Posterior cingulate gyrus (tissue), 11 donors: ENCODE measurements at regions of chr11 and their contacts with region 1.

Region 1: DNA sequence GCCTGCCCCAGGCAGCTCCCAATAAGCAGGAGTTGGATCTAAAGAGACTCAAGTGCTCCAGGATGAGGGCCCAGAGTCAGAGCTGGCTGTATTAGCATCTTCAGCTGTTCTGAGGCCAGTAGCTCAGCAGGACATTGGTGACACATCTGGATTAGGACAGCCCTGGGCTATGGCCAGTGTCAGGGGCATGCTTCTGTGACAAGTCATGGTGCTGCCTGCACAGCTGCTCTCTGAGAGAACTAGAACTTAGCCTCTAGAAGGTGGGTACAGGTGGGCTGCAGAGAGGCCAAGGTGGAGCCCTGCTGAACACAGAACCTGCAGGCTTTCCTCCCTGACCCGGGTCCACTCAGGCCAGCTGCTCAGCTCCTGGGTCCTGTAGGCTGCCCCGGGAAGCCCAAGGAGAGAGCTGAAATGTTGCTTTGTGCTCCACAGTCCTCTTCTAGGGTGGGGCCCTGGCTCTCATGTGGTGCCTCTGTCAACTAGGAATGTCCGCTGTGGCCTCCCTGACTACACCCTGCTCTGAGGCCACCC is 426.9 kb downstream of the SOX6 start:
- DNase-seq: peak in 1 of 10 donors; percentile 65

Region 2: DNA sequence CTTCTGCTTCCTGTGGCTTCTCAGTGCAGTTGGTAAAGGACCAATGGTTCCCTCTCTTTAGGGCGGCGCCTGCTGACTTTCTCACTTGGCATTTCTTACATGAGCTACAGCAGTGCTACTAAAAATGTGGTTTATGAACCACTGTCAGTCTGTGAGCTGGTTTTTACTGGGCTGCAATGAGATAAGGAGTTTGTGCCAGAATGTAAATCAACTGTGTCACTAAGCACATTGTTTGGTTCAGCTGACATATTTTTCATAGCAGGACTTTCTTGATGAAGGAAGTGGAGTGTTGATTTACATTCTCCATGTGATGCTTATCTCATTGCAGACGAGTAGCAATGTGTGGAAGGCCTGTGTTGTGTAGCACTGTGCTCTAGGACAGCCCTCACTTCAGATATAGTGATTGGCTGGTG is 36.4 kb before region 1 on chr11:
- intact Hi-C with region 1: no loop called
- DNase-seq: no peak

Region 3: GRCh38 chr11:15903246-15903645 is 26.2 kb before region 1 on chr11:
- intact Hi-C with region 1: loop called (anchors 2 kb)
- DNase-seq: peak in 1 of 10 donors; percentile 21

Region 4: DNA sequence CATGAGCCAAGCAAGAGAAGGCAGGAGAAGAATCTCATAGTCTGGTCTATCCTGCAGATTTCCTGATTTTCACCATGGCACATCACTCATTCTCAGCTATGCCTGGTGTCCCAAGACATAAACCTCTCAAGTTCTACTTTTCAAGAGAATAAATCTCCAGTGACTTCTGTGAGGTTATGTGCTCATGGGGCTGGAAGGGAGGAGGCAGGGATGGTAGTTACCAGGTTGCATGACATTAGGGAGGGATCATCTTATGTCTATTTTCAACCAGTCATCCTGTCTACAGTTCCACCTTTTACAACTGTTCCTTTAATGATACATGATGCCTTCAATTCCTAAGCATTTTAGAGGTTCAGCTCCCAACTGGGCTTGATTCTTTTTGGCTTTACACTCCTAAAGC is 129.2 kb after region 1 on chr11:
- intact Hi-C with region 1: no loop called
- DNase-seq: no peak

Region 5: DNA sequence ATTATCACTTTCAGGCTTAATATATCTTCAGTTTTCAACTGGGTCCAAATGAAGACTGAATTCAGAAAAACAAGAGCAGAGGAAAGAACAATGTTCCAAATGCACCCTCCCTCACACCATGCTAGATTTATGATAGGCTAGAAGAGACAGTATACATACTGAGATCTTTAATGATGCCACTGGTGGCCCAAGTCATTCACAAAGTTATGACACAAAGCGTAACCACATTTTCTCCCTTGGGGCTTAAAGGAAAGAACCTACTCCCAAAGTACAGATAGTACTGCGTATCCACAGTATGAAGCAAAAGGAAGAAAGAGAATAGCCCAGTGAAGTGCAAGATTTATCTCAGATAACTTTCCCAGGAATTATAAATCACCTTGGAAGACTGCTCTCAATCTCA is 437.8 kb after region 1 on chr11:
- intact Hi-C with region 1: no loop called
- DNase-seq: no peak